ENCODE measurements at regions of chr10 and their contacts with region 1.

Region 1: DNA sequence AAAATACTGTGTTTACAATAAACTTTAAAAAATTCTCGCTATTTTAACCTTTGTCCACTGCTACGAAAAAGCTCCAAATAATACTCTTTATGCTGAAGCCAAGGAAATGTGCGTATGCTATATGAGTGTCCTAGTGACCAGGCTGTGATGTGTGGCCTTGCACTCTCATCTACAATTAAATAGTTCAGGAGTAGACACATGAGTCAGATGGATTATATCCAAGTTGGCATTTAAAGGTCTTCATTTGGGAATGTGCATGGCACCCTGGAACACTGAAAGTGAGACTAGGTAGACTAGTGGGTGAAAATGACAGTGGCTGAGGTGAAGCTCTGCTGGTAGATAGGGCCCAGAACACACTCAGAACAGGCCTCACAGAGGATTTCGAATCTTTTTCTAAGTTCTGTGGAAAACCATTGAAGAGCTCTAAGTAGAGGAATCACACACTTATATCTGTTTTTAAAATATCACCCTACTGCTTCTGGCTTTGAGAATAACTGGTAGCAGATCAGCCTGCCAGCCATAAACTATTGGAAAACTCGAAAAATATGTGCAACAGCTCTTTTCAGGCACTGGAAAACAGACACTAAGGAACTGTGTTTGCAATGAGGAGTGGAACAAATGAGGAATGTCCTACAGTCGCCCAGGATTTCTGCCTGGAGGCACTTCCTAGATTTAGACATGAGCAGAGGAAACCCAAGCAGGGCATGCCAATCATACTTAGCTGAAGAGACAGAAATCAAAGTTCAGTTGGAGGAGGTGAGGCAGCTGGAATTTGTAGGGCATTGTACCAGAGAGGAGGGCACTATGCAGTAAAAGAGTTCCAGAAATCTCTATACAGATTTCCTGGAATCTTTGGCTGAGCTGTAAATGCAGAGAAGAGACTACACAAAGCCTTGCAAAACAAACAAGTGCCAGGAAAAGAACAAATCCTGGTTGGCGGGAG is 603.8 kb upstream of the LRRTM3 start:
- DNase-seq: peak in 1 of 5 donors; percentile 28
- ATAC-seq: peak; percentile 36 to 82 (median 70)
- H3K4me3 ChIP-seq: no peak overlapping the region
- H3K27ac ChIP-seq: peak overlapping the region in 11 of 12 donors; percentile 3 to 80 (median 51)
- H3K4me1 ChIP-seq: peaks cover 0 to 19% (median 9%) of the 10 kb centered on the region in 12 donors
- H3K27me3 ChIP-seq: no peaks in the 10 kb centered on the region
- CTCF ChIP-seq: no peak
- POLR2A ChIP-seq: no peak

Region 2: GRCh38 chr10:66627156-66627555 is 305.2 kb after region 1 on chr10:
- intact Hi-C with region 1: loop called in 1 of 10 experiments (anchors 10 kb)
- DNase-seq: no peak
- ATAC-seq: peak in 3 of 4 donors; percentile 65 to 67 (median 67)
- H3K4me3 ChIP-seq: no peak overlapping the region
- H3K27ac ChIP-seq: no peak overlapping the region
- H3K4me1 ChIP-seq: no peaks in the 10 kb centered on the region
- H3K27me3 ChIP-seq: no peaks in the 10 kb centered on the region
- CTCF ChIP-seq: peak in 9 of 12 donors; percentile 6 to 34 (median 19)
- POLR2A ChIP-seq: no peak

Measured in heart left ventricle (tissue), 16 donors.